ENCODE measurements at regions of chr5 and their contacts with region 1.

Region 1: GRCh38 chr5:150350524-150351344 is 6.8 kb upstream of the TCOF1 start:
- DNase-seq: no peak
- H3K4me3 ChIP-seq: no peak overlapping the region
- CTCF ChIP-seq: peak; percentile 79

Region 2: GRCh38 chr5:149605998-149606724 is 744.6 kb before region 1 on chr5:
- CTCF ChIA-PET with region 1: no interaction called
- POLR2A ChIA-PET with region 1: no interaction called
- DNase-seq: no peak
- H3K4me3 ChIP-seq: no peak overlapping the region
- CTCF ChIP-seq: no peak

Region 3: GRCh38 chr5:150227606-150228273 is 123.0 kb before region 1 on chr5:
- CTCF ChIA-PET with region 1: interaction called, 16 read pairs
- POLR2A ChIA-PET with region 1: no interaction called
- DNase-seq: no peak
- H3K4me3 ChIP-seq: no peak overlapping the region
- CTCF ChIP-seq: no peak

Region 4: GRCh38 chr5:150298701-150299451 is 51.9 kb before region 1 on chr5:
- CTCF ChIA-PET with region 1: interaction called, 12 read pairs
- POLR2A ChIA-PET with region 1: no interaction called
- DNase-seq: peak; percentile 96
- H3K4me3 ChIP-seq: no peak overlapping the region
- CTCF ChIP-seq: no peak

Region 5: GRCh38 chr5:150339165-150339564 is 11.6 kb before region 1 on chr5:
- CTCF ChIA-PET with region 1: interaction called, 37 read pairs
- POLR2A ChIA-PET with region 1: no interaction called
- DNase-seq: no peak
- H3K4me3 ChIP-seq: no peak overlapping the region
- CTCF ChIP-seq: no peak